OCI-LY7 (cell line): ENCODE measurements at regions of chr9 and their contacts with region 1.

Region 1: DNA sequence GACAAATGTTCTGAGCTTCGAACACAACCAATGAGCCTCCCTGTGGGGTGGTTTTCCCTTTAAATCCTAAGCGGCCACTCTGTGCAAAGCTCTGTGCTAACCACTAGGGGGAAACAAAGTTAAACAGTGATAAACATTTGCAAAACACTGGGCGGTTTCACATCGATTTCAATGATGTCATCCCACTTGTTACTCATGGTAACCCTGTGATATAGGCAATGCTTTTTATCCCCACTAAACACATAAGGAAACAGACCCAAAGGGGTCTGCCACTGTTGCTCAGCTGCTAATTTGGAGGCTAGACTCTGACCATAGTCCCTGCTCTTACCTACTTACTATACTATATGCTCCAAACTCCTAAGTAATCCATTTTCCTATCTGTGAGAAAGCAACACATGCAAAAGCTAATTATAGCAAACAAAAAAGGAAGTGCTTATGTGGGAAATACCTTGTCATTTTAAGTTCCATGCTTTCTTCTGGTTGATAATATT is 57.3 kb downstream of the PTPN3 start:
- DNase-seq: peak; percentile 54
- H3K4me3 ChIP-seq: no peak overlapping the region
- H3K27ac ChIP-seq: no peak overlapping the region
- H3K4me1 ChIP-seq: no peaks in the 10 kb centered on the region
- CTCF ChIP-seq: peak; percentile 85

Region 2: GRCh38 chr9:109369285-109369684 is 71.6 kb before region 1 on chr9:
- CTCF ChIA-PET with region 1: no interaction called
- POLR2A ChIA-PET with region 1: no interaction called
- intact Hi-C with region 1: no loop called
- DNase-seq: no peak
- H3K4me3 ChIP-seq: no peak overlapping the region
- H3K27ac ChIP-seq: no peak overlapping the region
- H3K4me1 ChIP-seq: no peaks in the 10 kb centered on the region
- CTCF ChIP-seq: no peak

Region 3: GRCh38 chr9:109469646-109470358 is 29.0 kb after region 1 on chr9:
- CTCF ChIA-PET with region 1: no interaction called
- POLR2A ChIA-PET with region 1: no interaction called
- intact Hi-C with region 1: loop called (anchors 1 kb)
- DNase-seq: peak; percentile 67
- H3K4me3 ChIP-seq: no peak overlapping the region
- H3K27ac ChIP-seq: no peak overlapping the region
- H3K4me1 ChIP-seq: no peaks in the 10 kb centered on the region
- CTCF ChIP-seq: peak; percentile 93